ENCODE measurements at regions of chr22 and their contacts with region 1.

Region 1: DNA sequence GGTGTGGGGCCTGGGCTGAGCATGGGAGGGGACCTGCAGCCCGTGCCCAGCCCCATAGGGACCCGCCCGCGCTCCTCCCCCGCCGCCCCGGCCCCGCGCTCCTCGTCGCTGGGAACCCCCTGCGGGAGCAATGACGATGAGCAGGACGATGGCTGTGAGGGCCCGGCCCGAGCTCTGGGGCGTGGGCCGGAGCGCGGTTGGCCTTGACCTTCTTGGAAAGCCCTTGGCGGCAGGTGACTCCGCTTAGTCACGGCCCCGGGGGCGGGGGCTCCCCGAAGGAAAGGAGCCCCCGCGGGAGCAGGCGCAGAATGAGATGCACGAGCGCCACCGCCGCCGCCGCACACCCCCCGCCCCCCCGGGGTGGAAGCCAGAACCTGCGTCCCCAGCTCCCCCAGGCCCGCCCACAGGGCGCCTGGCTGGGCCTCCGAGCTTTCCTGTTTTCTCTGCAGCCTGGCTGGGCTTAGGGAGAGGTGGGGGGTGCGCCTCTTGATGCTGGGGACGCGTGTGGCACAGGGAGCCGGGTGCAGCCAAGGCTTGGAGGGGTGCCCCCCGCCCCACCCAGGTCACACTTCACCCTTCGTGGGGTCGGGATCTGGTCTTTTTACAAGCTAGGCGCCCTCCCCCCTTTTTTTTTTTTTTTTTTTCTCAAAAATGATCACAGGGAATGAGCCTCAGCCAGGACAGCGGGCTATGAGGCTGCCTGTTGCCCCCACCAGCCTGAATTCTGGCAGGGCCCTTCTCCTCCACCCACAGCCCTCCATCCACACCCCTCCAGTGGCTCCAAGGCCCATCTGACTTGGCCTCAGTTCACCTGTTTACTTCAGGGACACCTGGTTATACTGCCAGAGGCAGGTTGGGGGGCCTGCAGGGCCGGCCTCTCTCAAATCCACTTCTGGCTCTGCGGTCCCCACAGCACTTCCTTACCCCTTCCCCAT is 17.9 kb downstream of the CRELD2 start:
- DNase-seq: peak; percentile 87 to 94
- ATAC-seq: peak; percentile 79 to 89 (median 79)
- H3K4me3 ChIP-seq: peak overlapping the region; percentile 32
- H3K4me3 Mint-ChIP-seq: peak overlapping the region; percentile 68
- H3K27ac ChIP-seq: peak overlapping the region; percentile 65
- H3K27ac Mint-ChIP-seq: peak overlapping the region; percentile 65 to 89
- H3K4me1 ChIP-seq: peaks cover 39% of the 10 kb centered on the region
- H3K4me1 Mint-ChIP-seq: peaks cover 6 to 16% of the 10 kb centered on the region in 2 donors
- H3K27me3 ChIP-seq: no peaks in the 10 kb centered on the region
- H3K27me3 Mint-ChIP-seq: no peaks in the 10 kb centered on the region
- CTCF ChIP-seq: no peak

Region 2: GRCh38 chr22:49827853-49828598 is 108.3 kb before region 1 on chr22 and contains the start of gene BRD1:
- intact Hi-C with region 1: no loop called
- DNase-seq: peak; percentile 49 to 84
- ATAC-seq: peak; percentile 68 to 74 (median 73)
- H3K4me3 ChIP-seq: peak within 1 kb of the TSS; percentile 55
- H3K4me3 Mint-ChIP-seq: peak within 1 kb of the TSS; percentile 93
- H3K27ac ChIP-seq: peak within 1 kb of the TSS; percentile 91
- H3K27ac Mint-ChIP-seq: peak within 1 kb of the TSS; percentile 83 to 88
- H3K4me1 ChIP-seq: peaks cover 42% of the 10 kb centered on the region
- H3K4me1 Mint-ChIP-seq: peaks cover 31 to 34% of the 10 kb centered on the region in 2 donors
- H3K27me3 ChIP-seq: no peaks in the 10 kb centered on the region
- H3K27me3 Mint-ChIP-seq: peaks cover 0 to 3% of the 10 kb centered on the region in 2 donors
- CTCF ChIP-seq: no peak
- total RNA-seq, gene BRD1: 126 to 154 (median 132) TPM

Region 3: DNA sequence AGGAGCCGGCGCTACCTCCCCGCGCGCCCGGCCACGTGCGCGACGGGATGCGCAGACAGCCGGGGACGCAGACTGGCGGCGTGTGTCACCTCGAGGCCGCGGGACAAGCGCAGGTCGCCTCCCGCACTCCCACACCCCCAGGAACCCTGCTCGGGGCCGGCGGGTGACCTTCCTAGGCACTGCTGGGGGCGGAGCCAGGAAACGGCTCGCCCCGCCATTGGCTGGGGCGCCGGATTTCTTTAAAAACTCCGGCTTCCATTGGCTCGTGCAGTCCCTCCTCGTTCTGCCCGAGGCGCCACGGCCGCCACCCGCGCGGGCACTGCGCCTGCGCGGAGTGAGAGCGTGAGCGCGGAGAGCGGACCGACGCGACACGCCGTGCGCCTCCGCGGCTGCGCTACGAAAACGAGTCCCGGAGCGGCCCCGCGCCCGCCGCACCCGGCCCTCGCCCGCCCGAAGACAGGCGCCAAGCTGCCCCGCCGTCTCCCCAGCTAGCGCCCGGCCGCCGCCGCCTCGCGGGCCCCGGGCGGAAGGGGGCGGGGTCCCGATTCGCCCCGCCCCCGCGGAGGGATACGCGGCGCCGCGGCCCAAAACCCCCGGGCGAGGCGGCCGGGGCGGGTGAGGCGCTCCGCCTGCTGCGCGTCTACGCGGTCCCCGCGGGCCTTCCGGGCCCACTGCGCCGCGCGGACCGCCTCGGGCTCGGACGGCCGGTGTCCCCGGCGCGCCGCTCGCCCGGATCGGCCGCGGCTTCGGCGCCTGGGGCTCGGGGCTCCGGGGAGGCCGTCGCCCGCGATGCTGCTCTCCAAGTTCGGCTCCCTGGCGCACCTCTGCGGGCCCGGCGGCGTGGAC is 24.1 kb after region 1 on chr22 and contains the start of gene PIM3:
- intact Hi-C with region 1: loop called (anchors 2 kb)
- DNase-seq: peak; percentile 89 to 96
- ATAC-seq: peak; percentile 70 to 87 (median 77)
- H3K4me3 ChIP-seq: peak within 1 kb of the TSS; percentile 60
- H3K4me3 Mint-ChIP-seq: peak within 1 kb of the TSS; percentile 90
- H3K27ac ChIP-seq: peak within 1 kb of the TSS; percentile 86
- H3K27ac Mint-ChIP-seq: peak within 1 kb of the TSS; percentile 88 to 90
- H3K4me1 ChIP-seq: peaks cover 35% of the 10 kb centered on the region
- H3K4me1 Mint-ChIP-seq: peaks cover 5 to 26% of the 10 kb centered on the region in 2 donors
- H3K27me3 ChIP-seq: no peaks in the 10 kb centered on the region
- H3K27me3 Mint-ChIP-seq: no peaks in the 10 kb centered on the region
- CTCF ChIP-seq: no peak
- total RNA-seq, gene PIM3: 107 to 130 (median 129) TPM